Gastrocnemius medialis (tissue), 4 donors: ENCODE measurements at regions of chr5 and their contacts with region 1.

Region 1: DNA sequence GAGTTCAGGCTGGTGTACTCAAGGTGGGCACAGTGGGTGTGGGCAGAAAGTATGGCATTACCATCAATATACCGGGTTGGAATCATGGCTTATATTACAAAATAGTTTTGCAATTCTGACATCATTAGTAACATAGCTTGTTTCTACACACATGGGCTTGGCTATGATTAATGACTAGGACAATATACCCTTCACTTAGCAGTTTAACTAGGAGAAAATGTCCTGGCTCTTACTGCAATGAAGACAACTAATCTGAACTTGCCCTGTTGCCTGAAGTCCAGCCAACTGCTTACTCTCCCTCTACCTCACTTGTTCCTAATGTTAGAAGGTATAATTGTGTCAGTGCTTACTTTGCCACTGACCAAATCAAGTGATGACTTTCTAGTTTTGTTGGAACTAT is 612.5 kb downstream of the EFNA5 start:
- DNase-seq: peak; percentile 34 to 46
- ATAC-seq: peak; percentile 90 to 96
- H3K4me3 ChIP-seq: no peak overlapping the region
- H3K27ac ChIP-seq: peak overlapping the region; percentile 42 to 83 (median 74)
- H3K4me1 ChIP-seq: peaks cover 16 to 32% of the 10 kb centered on the region in 2 donors
- H3K27me3 ChIP-seq: no peaks in the 10 kb centered on the region
- CTCF ChIP-seq: no peak
- POLR2A ChIP-seq: no peak

Region 2: GRCh38 chr5:105993027-105993426 is 1065.2 kb before region 1 on chr5:
- in situ Hi-C with region 1: no loop called
- intact Hi-C with region 1: no loop called
- DNase-seq: no peak
- ATAC-seq: no peak
- H3K4me3 ChIP-seq: no peak overlapping the region
- H3K27ac ChIP-seq: no peak overlapping the region
- H3K4me1 ChIP-seq: no peaks in the 10 kb centered on the region
- H3K27me3 ChIP-seq: no peaks in the 10 kb centered on the region
- CTCF ChIP-seq: no peak
- POLR2A ChIP-seq: no peak

Region 3: DNA sequence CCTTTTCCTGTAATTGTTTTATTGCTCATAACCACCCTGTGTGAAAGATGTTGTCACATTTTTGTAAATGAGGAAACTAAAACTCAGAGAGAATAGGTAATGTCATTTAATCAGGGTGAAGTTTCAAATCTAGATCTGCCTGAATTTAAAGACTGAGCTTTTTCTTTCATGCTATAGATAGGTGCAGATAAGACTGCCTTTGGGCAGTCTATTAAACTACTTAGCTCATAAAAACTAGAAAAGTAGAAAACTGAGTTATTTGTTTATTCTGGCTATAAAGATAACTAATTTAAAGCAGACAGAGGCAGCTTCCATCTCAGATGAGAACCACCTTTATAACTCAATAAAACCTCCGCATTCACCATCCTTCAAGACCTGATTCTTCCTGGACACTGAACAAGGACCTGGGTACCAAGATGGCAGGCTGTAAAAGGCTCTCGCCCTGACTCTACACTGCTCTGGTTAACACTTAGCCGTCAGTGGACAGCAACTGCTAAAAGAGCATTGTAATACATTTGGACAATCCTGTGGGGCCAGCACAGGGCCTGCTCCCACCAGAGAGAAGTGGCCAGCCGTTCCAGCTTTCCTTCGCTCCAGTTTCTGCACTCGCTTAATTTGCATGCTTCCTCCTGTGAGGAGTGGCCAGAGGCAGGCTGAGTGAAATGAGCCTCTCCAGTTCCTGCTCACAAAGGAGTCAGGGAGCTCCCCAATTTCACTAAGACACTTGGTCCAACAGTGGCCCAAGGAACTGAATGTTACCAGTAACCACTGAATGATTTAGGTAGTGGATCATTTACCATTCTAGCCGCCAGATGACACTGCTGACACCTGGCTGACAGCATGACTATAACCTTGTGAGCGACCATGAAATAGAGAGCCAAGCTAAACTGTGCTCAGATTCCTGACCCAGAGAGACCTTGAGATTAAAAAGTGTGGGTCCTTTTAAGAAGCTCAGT is 46.1 kb after region 1 on chr5:
- in situ Hi-C with region 1: no loop called
- intact Hi-C with region 1: loop called (anchors 5 kb)
- DNase-seq: peak; percentile 37 to 74
- ATAC-seq: peak; percentile 95 to 99
- H3K4me3 ChIP-seq: no peak overlapping the region
- H3K27ac ChIP-seq: peak overlapping the region; percentile 68 to 75 (median 71)
- H3K4me1 ChIP-seq: peaks cover 3 to 6% of the 10 kb centered on the region in 2 donors
- H3K27me3 ChIP-seq: no peaks in the 10 kb centered on the region
- CTCF ChIP-seq: peak; percentile 19 to 44 (median 24)
- POLR2A ChIP-seq: no peak